Activated T-helper 2 cell treated with anti-CD3 and anti-CD28 coated beads, Interferon-gamma antibody, Interleukin-2, Interleukin-4, amounts not matched to agents 10 μg/mL and 5 μg/mL and 100 μg/mL, durations not matched to agents 14 hours and 24 hours and 36 hours (primary cell): ENCODE measurements at regions of chr13 and their contacts with region 1.

Region 1: DNA sequence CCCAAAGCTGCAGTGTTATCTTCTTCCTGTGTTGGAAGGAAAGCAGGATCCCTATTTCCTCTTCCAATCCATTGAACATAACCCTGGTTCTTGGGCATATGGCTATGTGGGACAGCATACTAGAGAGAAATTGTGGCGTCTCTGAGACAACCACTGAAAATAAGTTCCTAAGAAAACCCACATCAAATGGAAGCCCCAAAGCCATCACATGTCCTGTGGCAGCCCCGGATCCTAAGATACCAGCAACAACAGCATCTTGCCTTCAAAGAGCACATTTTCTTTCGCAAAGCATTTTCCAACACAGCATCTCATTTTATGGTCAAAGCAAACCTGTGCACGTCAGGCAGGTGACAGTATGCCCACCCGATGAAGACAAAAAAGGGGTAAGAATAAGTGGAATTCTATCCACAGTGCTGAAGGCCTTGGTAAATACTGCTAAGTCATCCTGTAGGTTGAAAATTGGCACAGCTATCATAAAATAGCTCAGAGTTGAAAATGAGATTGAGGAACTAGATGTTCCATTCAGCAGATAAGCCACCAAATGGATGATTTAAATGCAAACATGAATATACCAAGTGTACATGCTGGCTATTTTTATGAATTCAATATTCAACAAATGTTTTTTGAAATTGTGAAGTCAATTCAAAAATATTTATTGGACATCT is 232.2 kb downstream of the DLEU7 start:
- DNase-seq: no peak
- H3K4me3 Mint-ChIP-seq: no peak overlapping the region
- H3K27ac Mint-ChIP-seq: no peak overlapping the region
- H3K4me1 Mint-ChIP-seq: peaks cover 19% of the 10 kb centered on the region
- H3K27me3 Mint-ChIP-seq: peaks cover 33% of the 10 kb centered on the region

Region 2: DNA sequence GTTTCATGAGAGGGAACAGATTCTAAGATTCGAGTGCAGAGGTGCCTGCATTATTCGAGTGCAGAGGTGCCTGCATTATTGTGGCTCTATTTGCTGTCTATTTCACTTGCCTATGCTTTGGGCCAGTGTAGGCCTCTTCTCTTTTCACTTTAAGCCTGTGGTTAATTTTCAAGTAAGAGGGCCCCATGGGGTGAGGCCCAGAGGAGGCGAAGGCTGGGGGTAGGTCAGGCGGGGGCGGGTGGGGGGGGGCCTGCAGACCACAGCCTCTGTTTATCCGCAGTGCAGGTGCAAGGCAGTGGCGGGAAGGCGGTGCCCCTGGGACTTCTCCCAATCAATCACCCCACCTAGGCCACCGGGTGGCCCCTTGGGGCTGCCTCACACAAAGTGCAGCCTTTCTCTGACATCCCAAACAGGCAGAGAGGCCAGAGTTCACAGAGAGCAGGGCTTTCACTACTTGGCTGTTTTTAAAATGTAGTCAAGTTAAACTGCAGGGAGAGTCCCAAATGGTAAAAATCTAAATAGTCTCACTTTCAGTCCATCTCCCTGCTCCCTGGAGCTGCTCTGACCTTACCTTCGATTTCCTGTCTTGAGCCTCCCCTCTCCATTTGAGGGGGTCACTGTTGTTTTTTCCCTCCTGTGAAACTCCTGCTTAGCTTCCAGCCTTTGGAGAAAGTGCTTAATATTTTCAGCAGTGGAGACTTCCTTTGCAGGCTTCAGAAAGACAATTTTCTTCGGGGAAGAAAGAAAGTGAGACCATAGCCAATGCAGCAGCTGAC is 16.8 kb before region 1 on chr13:
- intact Hi-C with region 1: loop called (anchors 2 kb)
- DNase-seq: peak; percentile 22
- H3K4me3 Mint-ChIP-seq: peak overlapping the region; percentile 34
- H3K27ac Mint-ChIP-seq: peak overlapping the region; percentile 74
- H3K4me1 Mint-ChIP-seq: peaks cover 35% of the 10 kb centered on the region
- H3K27me3 Mint-ChIP-seq: peaks cover 5% of the 10 kb centered on the region

Region 3: DNA sequence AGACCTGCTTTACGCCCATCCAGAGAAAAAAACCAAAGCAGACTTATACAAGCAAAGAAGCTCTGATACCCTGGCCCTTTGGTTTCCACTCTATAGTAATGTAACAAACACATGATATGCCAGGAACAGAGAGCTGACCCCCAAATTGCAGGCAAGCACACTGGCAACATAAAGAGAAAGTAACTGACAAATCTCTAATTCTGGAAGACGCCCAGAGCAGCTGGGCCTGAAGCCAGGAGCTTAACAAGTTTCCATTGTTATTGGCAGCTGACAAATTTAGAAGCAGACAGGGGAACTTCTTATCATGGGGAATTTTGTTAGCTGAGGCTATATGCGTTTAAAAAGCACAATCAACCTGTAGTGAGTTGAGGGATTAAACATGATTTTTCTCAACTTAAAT is 74.2 kb after region 1 on chr13:
- intact Hi-C with region 1: no loop called
- DNase-seq: no peak
- H3K4me3 Mint-ChIP-seq: no peak overlapping the region
- H3K27ac Mint-ChIP-seq: no peak overlapping the region
- H3K4me1 Mint-ChIP-seq: peaks cover 16% of the 10 kb centered on the region
- H3K27me3 Mint-ChIP-seq: peaks cover 58% of the 10 kb centered on the region